T-cell (primary cell): ENCODE measurements at regions of chr19 and their contacts with region 1.

Region 1: DNA sequence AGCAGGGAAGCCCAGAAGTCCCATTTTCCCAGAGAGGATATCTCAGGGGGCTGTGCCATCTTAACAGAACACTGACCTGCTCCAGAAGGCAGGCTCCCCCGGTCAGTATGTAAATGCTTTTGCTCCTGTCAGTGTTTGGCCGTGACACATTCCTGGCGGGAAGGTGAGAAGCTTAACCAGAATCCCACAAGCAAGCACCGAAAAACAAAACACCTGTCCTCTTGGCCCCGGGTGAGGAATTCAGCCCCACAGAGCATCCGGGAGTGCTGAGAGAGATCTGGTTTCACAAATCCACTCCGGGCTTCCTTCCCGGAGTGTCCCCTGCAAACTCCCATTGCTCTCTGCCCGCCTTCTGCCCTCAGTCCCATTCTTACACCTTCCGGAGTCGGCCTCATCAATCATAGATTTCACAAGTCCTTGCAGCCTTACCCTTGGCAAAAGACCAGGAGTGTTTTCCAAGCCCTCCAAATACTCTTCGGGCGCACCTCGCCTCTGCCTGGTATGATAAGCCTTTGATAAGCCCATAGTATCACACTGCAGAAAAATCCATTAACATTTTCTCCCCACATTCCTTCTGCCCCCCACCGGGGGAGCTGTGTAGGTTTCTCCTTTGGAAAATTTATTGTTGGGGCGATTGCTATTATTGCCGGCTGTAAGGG is 12.2 kb downstream of the TPM4 start:
- DNase-seq: no peak
- ATAC-seq: no peak
- H3K4me3 ChIP-seq: no peak overlapping the region
- H3K4me3 Mint-ChIP-seq: no peak overlapping the region
- H3K27ac ChIP-seq: no peak overlapping the region
- H3K27ac Mint-ChIP-seq: peak overlapping the region; percentile 58 to 77
- H3K4me1 ChIP-seq: peaks cover 21 to 45% of the 10 kb centered on the region in 2 experiments
- H3K4me1 Mint-ChIP-seq: peaks cover 38 to 50% (median 40%) of the 10 kb centered on the region in 3 donors
- H3K27me3 ChIP-seq: no peaks in the 10 kb centered on the region
- H3K27me3 Mint-ChIP-seq: no peaks in the 10 kb centered on the region

Region 2: GRCh38 chr19:16051254-16052025 is 37.0 kb before region 1 on chr19:
- CTCF ChIA-PET with region 1: interaction called in 1 of 2 experiments, 12 read pairs
- POLR2A ChIA-PET with region 1: no interaction called
- DNase-seq: peak in 28 of 35 experiments; percentile 17 to 72 (median 40)
- ATAC-seq: peak; percentile 91 to 100 (median 95)
- H3K4me3 ChIP-seq: no peak overlapping the region
- H3K4me3 Mint-ChIP-seq: no peak overlapping the region
- H3K27ac ChIP-seq: no peak overlapping the region
- H3K27ac Mint-ChIP-seq: peak overlapping the region; percentile 2 to 28
- H3K4me1 ChIP-seq: peaks cover 0 to 6% of the 10 kb centered on the region in 2 experiments
- H3K4me1 Mint-ChIP-seq: peaks cover 4 to 20% (median 8%) of the 10 kb centered on the region in 3 donors
- H3K27me3 ChIP-seq: no peaks in the 10 kb centered on the region
- H3K27me3 Mint-ChIP-seq: no peaks in the 10 kb centered on the region

Region 3: DNA sequence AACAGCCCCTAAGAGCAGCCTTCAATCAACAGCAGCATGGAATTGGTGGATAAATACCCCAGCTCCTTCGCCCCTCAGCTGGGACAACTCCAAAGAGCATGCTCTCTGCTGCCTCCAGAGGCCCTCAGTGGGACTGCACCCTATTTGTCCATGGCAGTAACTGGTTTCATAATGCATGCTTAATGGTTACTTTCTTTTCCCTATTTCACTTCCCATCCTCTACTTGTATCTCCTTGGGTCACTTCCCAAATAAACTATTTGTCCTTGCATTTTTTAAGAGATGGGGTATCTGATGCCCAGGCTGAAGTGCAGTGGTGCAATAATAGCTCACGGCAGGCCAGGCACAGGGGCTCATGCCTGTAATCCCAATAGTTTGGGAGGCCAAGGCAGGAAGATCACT is 25.7 kb before region 1 on chr19:
- CTCF ChIA-PET with region 1: interaction called, 4 to 12 read pairs
- POLR2A ChIA-PET with region 1: interaction called in 1 of 2 experiments, 8 read pairs
- DNase-seq: peak in 33 of 35 experiments; percentile 24 to 83 (median 62)
- ATAC-seq: peak; percentile 41 to 74 (median 49)
- H3K4me3 ChIP-seq: no peak overlapping the region
- H3K4me3 Mint-ChIP-seq: no peak overlapping the region
- H3K27ac ChIP-seq: no peak overlapping the region
- H3K27ac Mint-ChIP-seq: no peak overlapping the region
- H3K4me1 ChIP-seq: peaks cover 0 to 23% of the 10 kb centered on the region in 2 experiments
- H3K4me1 Mint-ChIP-seq: peaks cover 16 to 32% (median 18%) of the 10 kb centered on the region in 3 donors
- H3K27me3 ChIP-seq: peaks cover 0 to 9% of the 10 kb centered on the region in 2 experiments
- H3K27me3 Mint-ChIP-seq: peaks cover 3% of the 10 kb centered on the region in 2 donors

Region 4: GRCh38 chr19:16070366-16070990 is 18.0 kb before region 1 on chr19:
- CTCF ChIA-PET with region 1: interaction called, 4 to 13 read pairs
- POLR2A ChIA-PET with region 1: interaction called, 8 read pairs
- DNase-seq: peak; percentile 70 to 93 (median 85)
- ATAC-seq: peak; percentile 90 to 93 (median 92)
- H3K4me3 ChIP-seq: peak overlapping the region; percentile 35 to 40
- H3K4me3 Mint-ChIP-seq: peak overlapping the region in 2 of 3 donors; percentile 54 to 69
- H3K27ac ChIP-seq: peak overlapping the region; percentile 96
- H3K27ac Mint-ChIP-seq: no peak overlapping the region
- H3K4me1 ChIP-seq: peaks cover 32 to 63% of the 10 kb centered on the region in 2 experiments
- H3K4me1 Mint-ChIP-seq: peaks cover 41 to 46% (median 44%) of the 10 kb centered on the region in 3 donors
- H3K27me3 ChIP-seq: no peaks in the 10 kb centered on the region
- H3K27me3 Mint-ChIP-seq: no peaks in the 10 kb centered on the region